CD4-positive, alpha-beta T cell (primary cell): ENCODE measurements at regions of chr6 and their contacts with region 1.

Region 1: GRCh38 chr6:32843979-32844838 is at the start of gene PSMB8:
- DNase-seq: peak; percentile 94 to 99 (median 98)
- ATAC-seq: peak; percentile 79
- H3K4me3 ChIP-seq: peak within 1 kb of the TSS; percentile 94
- H3K4me3 Mint-ChIP-seq: peak within 1 kb of the TSS; percentile 97
- H3K27ac ChIP-seq: peak within 1 kb of the TSS; percentile 99 to 100
- H3K27ac Mint-ChIP-seq: peak within 1 kb of the TSS; percentile 99
- H3K4me1 ChIP-seq: peaks cover 73% of the 10 kb centered on the region
- H3K4me1 Mint-ChIP-seq: peaks cover 96% of the 10 kb centered on the region
- H3K27me3 ChIP-seq: no peaks in the 10 kb centered on the region
- H3K27me3 Mint-ChIP-seq: no peaks in the 10 kb centered on the region
- CTCF ChIP-seq: no peak
- total RNA-seq, gene PSMB8: 120 to 121 TPM

Region 2: DNA sequence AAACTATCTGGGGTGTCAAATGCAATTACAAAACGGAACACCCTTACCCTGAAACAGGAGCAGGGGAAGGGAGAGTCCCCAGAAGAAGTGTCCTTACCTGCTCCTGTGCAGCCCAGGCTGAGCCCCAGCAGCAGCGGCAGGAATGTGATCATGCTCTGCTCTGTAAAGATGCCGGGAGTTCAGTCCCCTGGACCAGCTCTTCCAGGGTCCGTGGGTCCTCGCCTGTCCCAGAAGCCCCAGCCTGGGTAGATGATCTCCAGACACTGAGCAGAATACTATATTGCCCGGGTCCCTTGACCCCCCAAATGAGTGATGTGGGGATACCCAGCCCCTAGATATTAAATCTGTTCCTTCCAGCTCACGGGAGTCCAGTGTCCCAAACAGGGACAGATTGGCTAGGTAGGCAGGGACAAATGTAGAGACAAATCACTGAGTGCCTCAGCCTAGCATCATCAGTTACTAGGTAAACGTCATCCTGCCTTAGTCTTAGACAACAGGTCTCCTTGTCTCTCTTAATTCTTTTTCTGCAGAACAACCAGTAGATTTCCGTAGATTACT is 96.5 kb after region 1 on chr6 and contains the start of gene HLA-DMB:
- CTCF ChIA-PET with region 1: interaction called, 14 read pairs
- POLR2A ChIA-PET with region 1: interaction called, 23 read pairs
- intact Hi-C with region 1: no loop called
- DNase-seq: peak in 10 of 14 experiments; percentile 15 to 89 (median 42)
- ATAC-seq: peak; percentile 85
- H3K4me3 ChIP-seq: peak within 1 kb of the TSS; percentile 72
- H3K4me3 Mint-ChIP-seq: peak within 1 kb of the TSS; percentile 96
- H3K27ac ChIP-seq: peak within 1 kb of the TSS; percentile 86 to 89
- H3K27ac Mint-ChIP-seq: peak within 1 kb of the TSS; percentile 99
- H3K4me1 ChIP-seq: peaks cover 58% of the 10 kb centered on the region
- H3K4me1 Mint-ChIP-seq: peaks cover 60% of the 10 kb centered on the region
- H3K27me3 ChIP-seq: no peaks in the 10 kb centered on the region
- H3K27me3 Mint-ChIP-seq: no peaks in the 10 kb centered on the region
- CTCF ChIP-seq: no peak
- total RNA-seq, gene HLA-DMB: 4.6 to 6.0 TPM